B cell (primary cell): ENCODE measurements at regions of chr2 and their contacts with region 1.

Region 1: GRCh38 chr2:200864176-200864976 is at the start of gene CLK1:
- DNase-seq: peak; percentile 97
- ATAC-seq: peak; percentile 85
- H3K4me3 ChIP-seq: peak within 1 kb of the TSS; percentile 85 to 100 (median 97)
- H3K4me3 Mint-ChIP-seq: peak within 1 kb of the TSS; percentile 93
- H3K27ac ChIP-seq: peak within 1 kb of the TSS; percentile 98 to 99
- H3K27ac Mint-ChIP-seq: peak within 1 kb of the TSS; percentile 100
- H3K4me1 ChIP-seq: peaks cover 27 to 31% of the 10 kb centered on the region in 2 donors
- H3K4me1 Mint-ChIP-seq: peaks cover 41% of the 10 kb centered on the region
- H3K27me3 ChIP-seq: no peaks in the 10 kb centered on the region
- H3K27me3 Mint-ChIP-seq: no peaks in the 10 kb centered on the region
- CTCF ChIP-seq: no peak
- total RNA-seq, gene CLK1: 396 and 409 TPM in 2 replicates

Region 2: DNA sequence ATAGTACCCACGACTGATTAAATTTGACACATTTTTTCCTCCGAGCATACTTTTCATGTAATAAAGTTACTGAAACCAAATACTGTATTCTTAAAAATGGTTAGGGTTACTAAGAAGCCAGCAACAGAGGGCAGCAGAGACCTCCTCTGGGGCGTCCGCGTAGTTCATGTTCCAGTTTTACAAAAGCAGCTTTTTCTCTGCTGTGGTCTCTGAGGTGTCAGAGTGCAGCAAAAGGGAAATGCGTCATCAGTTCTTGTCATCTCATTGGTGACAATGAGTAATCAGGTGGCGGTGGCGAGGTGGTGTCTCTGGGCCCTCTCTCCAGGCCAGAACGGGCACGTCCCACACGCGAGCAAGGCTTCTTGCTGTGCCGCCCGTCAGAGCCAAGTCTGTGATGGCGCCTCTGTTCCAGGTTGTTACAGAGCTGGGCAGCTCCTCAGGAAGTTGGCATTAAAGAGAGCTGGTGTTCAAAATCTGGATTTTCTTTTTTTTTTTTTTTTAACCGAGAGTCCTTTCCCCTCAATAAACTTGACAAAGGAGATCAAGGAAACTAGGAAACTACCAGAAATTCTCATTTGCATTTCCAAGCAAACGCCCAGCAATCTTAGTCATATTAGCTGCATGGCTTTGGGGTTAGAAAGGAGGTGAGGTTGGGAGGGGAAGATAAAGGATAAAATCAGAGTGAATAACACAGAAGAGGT is 151.2 kb before region 1 on chr2:
- CTCF ChIA-PET with region 1: interaction called, 7 read pairs
- POLR2A ChIA-PET with region 1: interaction called, 21 read pairs
- intact Hi-C with region 1: loop called (anchors 1 kb)
- DNase-seq: peak; percentile 91
- ATAC-seq: peak; percentile 99
- H3K4me3 ChIP-seq: peak overlapping the region in 4 of 5 experiments; percentile 5 to 52 (median 16)
- H3K4me3 Mint-ChIP-seq: peak overlapping the region; percentile 83
- H3K27ac ChIP-seq: peak overlapping the region; percentile 82 to 93
- H3K27ac Mint-ChIP-seq: peak overlapping the region; percentile 98
- H3K4me1 ChIP-seq: peaks cover 5 to 6% of the 10 kb centered on the region in 2 donors
- H3K4me1 Mint-ChIP-seq: peaks cover 15% of the 10 kb centered on the region
- H3K27me3 ChIP-seq: no peaks in the 10 kb centered on the region
- H3K27me3 Mint-ChIP-seq: peaks cover 10% of the 10 kb centered on the region
- CTCF ChIP-seq: peak; percentile 83

Region 3: GRCh38 chr2:200742426-200742825 is 122.0 kb before region 1 on chr2:
- CTCF ChIA-PET with region 1: no interaction called
- POLR2A ChIA-PET with region 1: no interaction called
- intact Hi-C with region 1: no loop called
- DNase-seq: no peak
- ATAC-seq: no peak
- H3K4me3 ChIP-seq: no peak overlapping the region
- H3K4me3 Mint-ChIP-seq: no peak overlapping the region
- H3K27ac ChIP-seq: no peak overlapping the region
- H3K27ac Mint-ChIP-seq: no peak overlapping the region
- H3K4me1 ChIP-seq: no peaks in the 10 kb centered on the region
- H3K4me1 Mint-ChIP-seq: no peaks in the 10 kb centered on the region
- H3K27me3 ChIP-seq: peaks cover 0 to 2% (median 0%) of the 10 kb centered on the region in 4 experiments
- H3K27me3 Mint-ChIP-seq: peaks cover 6% of the 10 kb centered on the region
- CTCF ChIP-seq: no peak

Region 4: GRCh38 chr2:200909958-200910357 is 45.6 kb after region 1 on chr2:
- CTCF ChIA-PET with region 1: no interaction called
- POLR2A ChIA-PET with region 1: no interaction called
- intact Hi-C with region 1: no loop called
- DNase-seq: no peak
- ATAC-seq: no peak
- H3K4me3 ChIP-seq: no peak overlapping the region
- H3K4me3 Mint-ChIP-seq: no peak overlapping the region
- H3K27ac ChIP-seq: no peak overlapping the region
- H3K27ac Mint-ChIP-seq: no peak overlapping the region
- H3K4me1 ChIP-seq: no peaks in the 10 kb centered on the region
- H3K4me1 Mint-ChIP-seq: no peaks in the 10 kb centered on the region
- H3K27me3 ChIP-seq: no peaks in the 10 kb centered on the region
- H3K27me3 Mint-ChIP-seq: no peaks in the 10 kb centered on the region
- CTCF ChIP-seq: no peak

Region 5: DNA sequence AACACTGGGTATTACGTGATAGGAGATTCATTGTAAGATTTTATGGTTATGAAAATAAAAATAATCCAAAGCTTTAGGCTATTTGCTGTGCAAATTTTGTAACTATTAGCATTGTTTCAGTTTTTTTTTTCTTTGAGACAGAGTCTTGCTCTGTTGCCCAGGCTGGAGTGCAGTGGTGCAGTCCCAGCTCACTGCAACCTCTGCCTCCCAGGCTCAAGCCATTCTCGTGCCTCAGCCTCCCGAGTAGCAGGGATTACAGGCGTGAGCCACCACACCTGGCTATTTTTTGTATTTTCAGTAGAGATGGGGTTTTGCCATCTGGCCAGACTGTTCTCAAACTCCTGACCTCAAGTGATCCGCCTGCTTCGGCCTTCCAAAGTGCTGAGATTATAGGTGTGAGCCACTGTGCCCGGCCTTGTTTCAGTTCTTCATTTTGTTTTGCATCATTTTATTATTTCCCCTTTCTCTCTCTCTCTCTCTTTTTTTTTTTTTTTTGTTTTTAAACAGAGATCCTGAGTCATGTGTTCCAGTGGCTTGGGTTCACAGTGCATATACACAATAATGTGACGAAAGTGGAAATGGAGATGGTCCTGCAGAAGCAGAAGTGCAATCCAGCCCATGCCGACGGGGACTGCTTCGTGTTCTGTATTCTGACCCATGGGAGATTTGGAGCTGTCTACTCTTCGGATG is 344.3 kb after region 1 on chr2:
- CTCF ChIA-PET with region 1: no interaction called
- POLR2A ChIA-PET with region 1: no interaction called
- intact Hi-C with region 1: loop called (anchors 1 kb)
- DNase-seq: peak; percentile 90
- ATAC-seq: peak; percentile 85
- H3K4me3 ChIP-seq: peak overlapping the region in 3 of 5 experiments; percentile 8 to 40 (median 31)
- H3K4me3 Mint-ChIP-seq: peak overlapping the region; percentile 68
- H3K27ac ChIP-seq: peak overlapping the region; percentile 60 to 76
- H3K27ac Mint-ChIP-seq: peak overlapping the region; percentile 94
- H3K4me1 ChIP-seq: peaks cover 34 to 42% of the 10 kb centered on the region in 2 donors
- H3K4me1 Mint-ChIP-seq: peaks cover 58% of the 10 kb centered on the region
- H3K27me3 ChIP-seq: no peaks in the 10 kb centered on the region
- H3K27me3 Mint-ChIP-seq: no peaks in the 10 kb centered on the region
- CTCF ChIP-seq: no peak

Region 6: GRCh38 chr2:202265467-202266277 is 1401.3 kb after region 1 on chr2 and contains the start of gene NOP58:
- CTCF ChIA-PET with region 1: no interaction called
- POLR2A ChIA-PET with region 1: no interaction called
- intact Hi-C with region 1: loop called (anchors 10 kb)
- DNase-seq: peak; percentile 95
- ATAC-seq: peak; percentile 86
- H3K4me3 ChIP-seq: peak within 1 kb of the TSS; percentile 70 to 100 (median 97)
- H3K4me3 Mint-ChIP-seq: peak within 1 kb of the TSS; percentile 57
- H3K27ac ChIP-seq: peak within 1 kb of the TSS; percentile 81 to 93
- H3K27ac Mint-ChIP-seq: peak within 1 kb of the TSS; percentile 71
- H3K4me1 ChIP-seq: peaks cover 25 to 42% of the 10 kb centered on the region in 2 donors
- H3K4me1 Mint-ChIP-seq: peaks cover 19% of the 10 kb centered on the region
- H3K27me3 ChIP-seq: no peaks in the 10 kb centered on the region
- H3K27me3 Mint-ChIP-seq: no peaks in the 10 kb centered on the region
- CTCF ChIP-seq: no peak
- total RNA-seq, gene NOP58: 136 and 138 TPM in 2 replicates